ENCODE measurements at regions of chr3 and their contacts with region 1.

Region 1: DNA sequence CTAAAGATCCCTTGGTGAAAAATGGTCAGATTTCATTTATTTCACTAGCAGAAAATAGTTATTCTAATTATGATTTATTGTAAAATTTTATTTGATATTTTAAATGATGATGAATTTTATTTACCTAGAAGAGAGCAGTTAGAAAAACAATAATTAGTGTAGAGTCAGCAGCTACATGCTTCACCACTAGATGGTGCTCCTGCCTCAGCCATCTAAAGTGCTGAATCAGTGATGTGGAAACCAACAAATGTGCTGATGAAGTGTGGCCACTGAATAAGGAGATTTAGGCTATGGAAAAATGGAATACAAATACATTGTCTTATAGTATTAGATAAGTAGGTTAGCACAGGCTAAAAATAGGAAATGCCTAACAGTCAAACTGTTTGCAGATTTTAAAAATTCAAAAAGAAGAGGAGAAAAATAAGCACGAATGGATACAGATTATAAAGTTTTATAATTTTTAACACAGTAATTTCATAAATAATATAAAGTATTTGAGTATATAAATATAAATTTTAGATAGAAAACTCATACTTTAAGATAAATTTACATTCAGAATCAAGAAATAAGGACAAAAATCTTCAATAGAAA is 109.8 kb downstream of the PPP2R3A start:
- DNase-seq: peak; percentile 69
- H3K4me3 ChIP-seq: no peak overlapping the region
- H3K27ac ChIP-seq: no peak overlapping the region
- H3K4me1 ChIP-seq: no peaks in the 10 kb centered on the region
- H3K27me3 ChIP-seq: no peaks in the 10 kb centered on the region
- CTCF ChIP-seq: peak; percentile 85 to 93 (median 91)
- POLR2A ChIP-seq: no peak

Region 2: GRCh38 chr3:136196401-136197158 is 121.3 kb after region 1 on chr3:
- intact Hi-C with region 1: loop called (anchors 5 kb)
- DNase-seq: peak; percentile 99
- H3K4me3 ChIP-seq: peak overlapping the region; percentile 88 to 99
- H3K27ac ChIP-seq: peak overlapping the region; percentile 99 to 100
- H3K4me1 ChIP-seq: peaks cover 2% of the 10 kb centered on the region
- H3K27me3 ChIP-seq: no peaks in the 10 kb centered on the region
- CTCF ChIP-seq: peak in 2 of 4 experiments; percentile 12 to 19
- POLR2A ChIP-seq: peak; percentile 75

Region 3: GRCh38 chr3:136250226-136250902 is 175.1 kb after region 1 on chr3 and contains the start of gene PCCB:
- intact Hi-C with region 1: loop called (anchors 2 kb)
- DNase-seq: peak; percentile 94
- H3K4me3 ChIP-seq: peak within 1 kb of the TSS; percentile 52 to 79
- H3K27ac ChIP-seq: peak within 1 kb of the TSS; percentile 85 to 90
- H3K4me1 ChIP-seq: peaks cover 4% of the 10 kb centered on the region
- H3K27me3 ChIP-seq: no peaks in the 10 kb centered on the region
- CTCF ChIP-seq: peak; percentile 74 to 96 (median 89)
- POLR2A ChIP-seq: peak; percentile 31
- total RNA-seq, gene PCCB: 60.9 to 70.3 TPM

Region 4: DNA sequence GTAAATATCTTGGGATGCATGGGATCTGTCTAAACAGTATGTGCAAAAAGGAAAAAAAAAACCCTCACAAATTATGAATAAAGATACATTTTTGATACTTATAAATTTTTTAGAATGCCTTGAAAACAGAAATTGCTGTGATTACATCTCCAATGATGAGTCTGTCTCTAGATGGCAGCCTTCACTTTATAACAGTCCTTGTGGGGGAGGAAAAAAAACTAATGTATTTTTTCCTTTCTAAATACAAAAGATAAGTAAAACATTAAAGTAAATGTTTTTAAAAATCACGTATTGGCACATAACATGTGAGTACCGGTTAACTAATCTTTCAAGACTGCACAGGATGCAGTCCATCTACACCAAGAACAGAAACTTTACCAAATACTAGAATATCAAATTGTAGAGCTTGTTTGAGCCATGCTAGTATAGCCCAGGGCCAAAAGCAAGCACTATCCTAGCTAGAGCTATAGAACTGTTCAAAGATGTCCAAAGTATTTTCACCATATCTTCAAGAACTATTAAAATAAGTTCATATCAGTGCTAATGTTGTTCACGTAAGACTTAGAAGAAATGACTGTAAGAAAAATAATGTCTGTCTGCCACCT is 470.5 kb after region 1 on chr3:
- intact Hi-C with region 1: loop called (anchors 10 kb)
- DNase-seq: no peak
- H3K4me3 ChIP-seq: no peak overlapping the region
- H3K27ac ChIP-seq: no peak overlapping the region
- H3K4me1 ChIP-seq: no peaks in the 10 kb centered on the region
- H3K27me3 ChIP-seq: no peaks in the 10 kb centered on the region
- CTCF ChIP-seq: no peak
- POLR2A ChIP-seq: no peak